Cardiac septum (tissue), 1 donor: ENCODE measurements at regions of chr4 and their contacts with region 1.

Region 1: DNA sequence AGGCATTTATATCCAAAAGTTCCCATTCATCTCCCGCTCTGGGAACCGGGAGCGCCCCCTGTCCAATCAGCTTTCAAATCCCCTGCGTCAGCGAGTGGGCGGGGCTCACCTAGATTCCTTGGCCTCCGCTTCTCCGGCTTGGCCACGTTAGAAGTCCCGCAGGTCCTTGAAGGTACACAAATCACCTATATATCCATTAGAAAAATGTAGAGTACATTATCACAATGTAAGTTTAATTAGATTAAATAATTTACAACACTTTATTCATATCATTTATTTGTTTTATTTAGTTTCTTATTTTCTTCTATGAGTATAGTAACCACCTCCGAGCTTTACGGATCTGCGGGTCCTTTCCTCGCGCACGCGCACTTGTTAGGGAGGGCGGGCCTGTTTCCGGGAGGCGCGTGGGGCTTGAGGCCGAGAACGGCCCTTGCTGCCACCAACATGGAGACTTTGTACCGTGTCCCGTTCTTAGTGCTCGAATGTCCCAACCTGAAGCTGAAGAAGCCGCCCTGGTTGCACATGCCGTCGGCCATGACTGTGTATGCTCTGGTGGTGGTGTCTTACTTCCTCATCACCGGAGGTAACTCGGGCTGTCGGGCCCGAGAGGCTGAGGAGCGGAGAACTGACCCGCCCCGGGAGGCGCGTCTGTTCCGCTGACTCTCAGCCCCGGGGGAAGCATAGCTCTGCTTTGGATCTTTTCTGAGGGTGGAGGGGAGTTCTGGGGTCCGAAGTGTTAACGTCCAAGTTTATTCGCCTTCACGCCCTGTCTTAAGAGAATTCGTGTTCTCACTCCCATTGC is at the start of gene OSTC:
- DNase-seq: peak; percentile 97
- total RNA-seq, gene OSTC: 38.0 TPM

Region 2: DNA sequence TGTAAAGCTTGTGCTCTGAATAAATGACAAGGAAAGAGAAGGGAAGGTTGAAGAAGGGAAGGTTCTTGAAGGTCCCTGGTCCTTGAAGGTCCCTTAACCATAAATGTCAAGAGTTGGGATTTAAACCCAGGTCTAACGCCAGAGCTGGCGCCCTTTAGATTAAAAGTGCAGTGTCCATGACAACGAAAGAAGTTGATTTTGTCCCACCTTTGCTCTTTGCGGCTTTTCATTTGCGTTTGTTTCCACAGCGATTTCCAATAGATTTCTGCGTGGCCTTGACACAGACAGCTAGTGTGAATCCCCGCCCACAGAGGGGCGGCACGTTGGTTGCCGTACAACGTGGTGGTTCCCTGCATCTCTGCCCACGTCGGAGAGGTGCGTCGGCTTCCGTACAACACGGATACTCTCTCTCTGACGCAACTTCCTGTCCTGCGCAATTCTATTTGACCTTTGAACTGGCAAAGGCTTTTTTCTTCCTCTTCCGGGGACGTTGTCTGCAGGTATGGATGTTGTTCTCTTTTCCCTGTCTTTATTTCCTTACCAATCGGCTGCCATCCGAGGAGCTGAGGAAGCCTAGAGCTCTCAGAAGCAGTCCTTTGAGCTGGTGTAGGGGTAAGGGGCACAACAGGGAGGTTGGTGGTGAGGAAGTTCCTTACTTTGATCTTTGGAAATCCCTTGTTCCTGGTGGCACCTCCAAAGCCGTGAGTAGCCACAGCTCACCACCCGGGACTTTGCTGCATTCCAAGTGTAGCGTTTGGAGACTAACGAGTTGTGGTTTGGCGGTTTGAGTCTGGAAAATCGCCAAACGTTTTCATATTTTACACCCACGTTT is 30.1 kb before region 1 on chr4 and contains the start of gene RPL34:
- intact Hi-C with region 1: loop called (anchors 2 kb)
- DNase-seq: peak; percentile 97
- total RNA-seq, gene RPL34: 534 TPM

Region 3: GRCh38 chr4:108926061-108926460 is 275.6 kb after region 1 on chr4:
- intact Hi-C with region 1: no loop called
- DNase-seq: no peak